Left ventricle myocardium superior (tissue), 1 donor: ENCODE measurements at regions of chr7 and their contacts with region 1.

Region 1: DNA sequence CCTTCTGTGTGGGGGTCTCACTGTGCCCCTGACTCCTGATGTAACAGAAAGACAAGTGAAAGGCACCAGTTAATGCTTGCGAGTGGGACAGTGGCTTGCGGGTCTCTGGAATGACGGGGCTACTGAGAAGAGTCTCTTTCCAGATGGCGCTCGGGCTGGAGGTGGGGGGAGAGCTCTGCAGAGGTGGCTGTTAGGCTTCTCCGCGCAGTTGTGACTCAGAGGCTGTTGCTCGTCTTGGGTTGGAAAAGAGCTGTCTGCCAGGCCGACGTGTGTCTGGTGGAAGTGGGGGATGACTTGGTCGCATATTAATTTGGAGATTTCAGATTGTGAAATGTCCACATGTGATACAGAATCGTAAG is 27.9 kb upstream of the SH2B2 start:
- DNase-seq: no peak
- ATAC-seq: no peak

Region 2: GRCh38 chr7:101614939-101615302 is 643.8 kb before region 1 on chr7:
- intact Hi-C with region 1: loop called (anchors 10 kb)
- DNase-seq: no peak
- ATAC-seq: no peak